Natural killer cell (primary cell): ENCODE measurements at regions of chr6 and their contacts with region 1.

Region 1: GRCh38 chr6:4018172-4018905 is 60.6 kb downstream of the FAM217A start:
- DNase-seq: peak; percentile 91 to 99
- ATAC-seq: peak; percentile 67 to 86 (median 73)
- H3K4me3 ChIP-seq: peak overlapping the region; percentile 91
- H3K4me3 Mint-ChIP-seq: peak overlapping the region; percentile 98
- H3K27ac ChIP-seq: peak overlapping the region; percentile 98
- H3K27ac Mint-ChIP-seq: peak overlapping the region; percentile 98
- H3K4me1 ChIP-seq: peaks cover 20% of the 10 kb centered on the region
- H3K4me1 Mint-ChIP-seq: peaks cover 59 to 68% of the 10 kb centered on the region in 2 donors
- H3K27me3 ChIP-seq: no peaks in the 10 kb centered on the region
- H3K27me3 Mint-ChIP-seq: no peaks in the 10 kb centered on the region
- CTCF ChIP-seq: peak; percentile 33

Region 2: GRCh38 chr6:3118353-3119039 is 899.8 kb before region 1 on chr6 and contains the start of gene BPHL:
- intact Hi-C with region 1: loop called (anchors 5 kb)
- DNase-seq: peak; percentile 99 to 100
- ATAC-seq: peak; percentile 91 to 99 (median 94)
- H3K4me3 ChIP-seq: peak within 1 kb of the TSS; percentile 69
- H3K4me3 Mint-ChIP-seq: peak within 1 kb of the TSS; percentile 92
- H3K27ac ChIP-seq: peak within 1 kb of the TSS; percentile 95
- H3K27ac Mint-ChIP-seq: peak within 1 kb of the TSS; percentile 91 to 97
- H3K4me1 ChIP-seq: peaks cover 7% of the 10 kb centered on the region
- H3K4me1 Mint-ChIP-seq: peaks cover 17 to 18% of the 10 kb centered on the region in 2 donors
- H3K27me3 ChIP-seq: no peaks in the 10 kb centered on the region
- H3K27me3 Mint-ChIP-seq: no peaks in the 10 kb centered on the region
- CTCF ChIP-seq: no peak
- total RNA-seq, gene BPHL: 2.9 to 5.9 (median 5.7) TPM

Region 3: DNA sequence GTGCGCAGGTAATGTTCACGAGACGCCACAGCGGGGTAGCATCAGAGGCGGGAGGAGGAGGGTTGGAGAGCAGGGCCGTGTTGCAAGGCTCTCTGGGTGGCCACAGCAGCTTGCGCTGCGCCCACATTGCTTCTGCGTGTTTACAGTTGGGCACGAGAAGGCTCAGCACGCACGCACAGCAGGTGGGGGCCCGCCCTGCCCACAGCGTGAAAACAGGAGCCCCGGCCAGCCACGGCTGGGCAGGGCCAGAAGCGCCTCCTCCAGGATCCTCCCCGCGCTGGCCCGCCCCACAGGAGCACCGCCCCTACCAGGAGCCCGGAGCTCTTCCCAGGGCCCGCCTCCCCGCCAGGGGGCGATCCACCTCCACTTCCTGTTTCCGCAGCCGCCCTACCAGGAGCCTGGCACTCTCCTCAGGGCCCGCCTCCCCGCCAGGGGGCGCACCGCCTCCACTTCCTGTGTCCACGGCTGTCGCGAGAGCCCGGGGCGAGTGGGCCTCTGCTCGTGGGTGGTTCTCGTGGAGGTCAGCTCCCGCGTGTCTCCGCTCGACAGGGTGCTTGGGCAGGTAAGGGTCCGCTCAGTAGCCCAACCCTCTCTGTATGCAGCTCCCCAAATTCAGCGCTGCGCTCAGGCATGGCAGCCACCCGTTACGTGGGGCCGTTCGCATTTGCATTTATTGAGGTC is 169.3 kb before region 1 on chr6 and contains the start of gene FAM50B:
- intact Hi-C with region 1: loop called (anchors 2 kb)
- DNase-seq: peak; percentile 85 to 93
- ATAC-seq: peak; percentile 90 to 95 (median 91)
- H3K4me3 ChIP-seq: peak within 1 kb of the TSS; percentile 54
- H3K4me3 Mint-ChIP-seq: peak within 1 kb of the TSS; percentile 88
- H3K27ac ChIP-seq: peak within 1 kb of the TSS; percentile 36
- H3K27ac Mint-ChIP-seq: peak within 1 kb of the TSS; percentile 73 to 83
- H3K4me1 ChIP-seq: peaks cover 14% of the 10 kb centered on the region
- H3K4me1 Mint-ChIP-seq: peaks cover 16 to 21% of the 10 kb centered on the region in 2 donors
- H3K27me3 ChIP-seq: no peaks in the 10 kb centered on the region
- H3K27me3 Mint-ChIP-seq: peaks cover 3 to 7% of the 10 kb centered on the region in 2 donors
- CTCF ChIP-seq: peak; percentile 84
- total RNA-seq, gene FAM50B: 1.9 to 4.7 (median 1.9) TPM

Region 4: GRCh38 chr6:4055420-4056041 is 37.2 kb after region 1 on chr6:
- intact Hi-C with region 1: loop called (anchors 2 kb)
- DNase-seq: peak in 1 of 2 donors; percentile 35
- ATAC-seq: no peak
- H3K4me3 ChIP-seq: no peak overlapping the region
- H3K4me3 Mint-ChIP-seq: no peak overlapping the region
- H3K27ac ChIP-seq: no peak overlapping the region
- H3K27ac Mint-ChIP-seq: peak overlapping the region in 1 of 2 donors; percentile 53
- H3K4me1 ChIP-seq: peaks cover 9% of the 10 kb centered on the region
- H3K4me1 Mint-ChIP-seq: peaks cover 18 to 24% of the 10 kb centered on the region in 2 donors
- H3K27me3 ChIP-seq: no peaks in the 10 kb centered on the region
- H3K27me3 Mint-ChIP-seq: no peaks in the 10 kb centered on the region
- CTCF ChIP-seq: no peak

Region 5: GRCh38 chr6:4135665-4136353 is 117.5 kb after region 1 on chr6:
- intact Hi-C with region 1: loop called (anchors 5 kb)
- DNase-seq: peak; percentile 80 to 96
- ATAC-seq: peak; percentile 84 to 94 (median 91)
- H3K4me3 ChIP-seq: peak overlapping the region; percentile 74
- H3K4me3 Mint-ChIP-seq: peak overlapping the region; percentile 81
- H3K27ac ChIP-seq: peak overlapping the region; percentile 46
- H3K27ac Mint-ChIP-seq: peak overlapping the region; percentile 34 to 94
- H3K4me1 ChIP-seq: peaks cover 12% of the 10 kb centered on the region
- H3K4me1 Mint-ChIP-seq: peaks cover 19 to 26% of the 10 kb centered on the region in 2 donors
- H3K27me3 ChIP-seq: no peaks in the 10 kb centered on the region
- H3K27me3 Mint-ChIP-seq: peaks cover 5 to 20% of the 10 kb centered on the region in 2 donors
- CTCF ChIP-seq: no peak